ENCODE measurements at regions of chr12 and their contacts with region 1.

Region 1: DNA sequence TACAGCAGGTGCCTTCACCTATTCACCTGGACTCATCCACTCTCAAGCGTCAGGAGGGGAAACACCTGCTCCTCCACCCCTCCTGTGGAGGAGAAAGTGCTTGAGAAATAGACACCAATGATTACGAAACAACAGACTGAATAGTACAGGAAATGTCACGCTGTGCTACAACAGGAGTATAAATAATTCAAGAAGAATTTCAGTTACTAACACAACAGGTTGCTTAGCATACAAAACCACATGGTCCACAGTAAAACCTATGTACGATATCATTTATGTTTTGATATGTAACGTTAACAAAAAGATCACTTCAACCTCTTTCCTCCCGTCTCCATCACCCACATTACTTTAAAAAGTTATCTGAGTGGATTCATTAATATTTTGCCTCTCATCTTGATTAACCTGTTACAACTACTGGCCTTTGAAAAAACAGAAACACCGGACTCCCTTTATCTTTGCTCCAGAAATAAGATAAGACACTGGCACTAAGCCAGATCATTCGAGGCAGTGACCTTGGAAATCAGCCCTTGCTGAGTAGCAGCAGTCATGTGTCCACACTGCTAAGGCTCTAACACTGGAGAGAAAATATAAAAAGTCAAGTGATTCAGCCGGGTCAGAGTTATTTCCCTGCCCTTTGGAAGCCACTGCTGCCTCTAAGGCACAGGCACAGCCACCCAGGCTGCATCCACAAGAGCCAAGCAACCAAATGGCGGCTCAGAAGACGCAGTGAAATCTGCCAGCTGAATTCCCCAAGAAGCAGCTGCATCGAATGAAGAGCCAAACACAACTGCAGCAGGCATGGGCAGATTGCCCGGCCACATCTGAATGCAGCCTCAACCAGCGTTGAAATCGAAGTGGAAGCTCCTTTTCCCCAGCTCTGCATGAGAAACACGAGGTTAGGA is 40.9 kb downstream of the NT5DC3 start:
- DNase-seq: peak; percentile 70 to 96
- H3K4me3 ChIP-seq: peak overlapping the region; percentile 29; the same call in 1 of the 2 replicates
- H3K27ac ChIP-seq: peak overlapping the region; percentile 87
- H3K4me1 ChIP-seq: peaks cover 72% of the 10 kb centered on the region
- H3K27me3 ChIP-seq: no peaks in the 10 kb centered on the region
- CTCF ChIP-seq: no peak

Region 2: DNA sequence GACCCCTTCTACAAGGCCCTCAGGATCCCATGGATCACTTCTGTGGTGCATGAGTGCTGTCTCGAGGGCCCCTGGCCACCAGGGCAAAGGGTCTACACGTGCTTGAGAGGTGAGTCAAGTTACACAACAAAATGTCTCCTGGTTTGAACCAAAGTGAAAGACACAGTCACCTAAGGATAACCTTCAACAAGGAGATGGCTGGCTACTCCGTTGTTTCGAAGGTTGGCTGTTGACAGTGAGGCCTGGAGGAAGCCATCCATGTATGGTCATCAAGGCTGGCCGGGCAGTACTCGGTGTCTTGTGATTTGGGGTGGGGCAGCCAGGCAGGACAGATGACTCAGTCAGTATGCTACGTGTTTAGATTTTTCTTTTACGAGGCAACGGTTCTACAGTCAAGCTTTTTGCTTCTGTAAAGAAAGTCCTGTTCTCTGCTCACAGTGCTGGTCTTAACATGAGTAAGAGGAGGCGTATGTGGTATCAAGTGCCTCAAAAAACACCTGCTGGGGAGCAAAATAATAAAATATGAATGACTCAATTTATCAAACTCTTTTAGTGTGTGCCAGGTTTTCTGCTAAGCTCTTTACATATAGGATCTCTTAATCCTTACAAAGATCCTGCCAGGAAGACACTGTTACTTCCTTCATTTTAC is 59.0 kb after region 1 on chr12:
- CTCF ChIA-PET with region 1: no interaction called
- POLR2A ChIA-PET with region 1: no interaction called
- intact Hi-C with region 1: no loop called
- DNase-seq: peak; percentile 73 to 96
- H3K4me3 ChIP-seq: peak overlapping the region; percentile 22; the same call in 1 of the 2 replicates
- H3K27ac ChIP-seq: peak overlapping the region; percentile 86
- H3K4me1 ChIP-seq: peaks cover 34% of the 10 kb centered on the region
- H3K27me3 ChIP-seq: no peaks in the 10 kb centered on the region
- CTCF ChIP-seq: no peak

Region 3: GRCh38 chr12:105084251-105085250 is 1284.4 kb after region 1 on chr12 and contains the start of gene ALDH1L2:
- CTCF ChIA-PET with region 1: no interaction called
- POLR2A ChIA-PET with region 1: interaction called, 26 read pairs
- intact Hi-C with region 1: no loop called
- DNase-seq: peak in 1 of 2 experiments; percentile 55
- H3K4me3 ChIP-seq: peak within 1 kb of the TSS; percentile 54; the same call in 1 of the 2 replicates
- H3K27ac ChIP-seq: no peak within 1 kb of the TSS
- H3K4me1 ChIP-seq: peaks cover 8% of the 10 kb centered on the region
- H3K27me3 ChIP-seq: no peaks in the 10 kb centered on the region
- CTCF ChIP-seq: no peak
- total RNA-seq, gene ALDH1L2: 2.2 and 5.0 TPM in 2 replicates

Measured in PC-9 (cell line).